ENCODE measurements at regions of chr12 and their contacts with region 1.

Region 1: DNA sequence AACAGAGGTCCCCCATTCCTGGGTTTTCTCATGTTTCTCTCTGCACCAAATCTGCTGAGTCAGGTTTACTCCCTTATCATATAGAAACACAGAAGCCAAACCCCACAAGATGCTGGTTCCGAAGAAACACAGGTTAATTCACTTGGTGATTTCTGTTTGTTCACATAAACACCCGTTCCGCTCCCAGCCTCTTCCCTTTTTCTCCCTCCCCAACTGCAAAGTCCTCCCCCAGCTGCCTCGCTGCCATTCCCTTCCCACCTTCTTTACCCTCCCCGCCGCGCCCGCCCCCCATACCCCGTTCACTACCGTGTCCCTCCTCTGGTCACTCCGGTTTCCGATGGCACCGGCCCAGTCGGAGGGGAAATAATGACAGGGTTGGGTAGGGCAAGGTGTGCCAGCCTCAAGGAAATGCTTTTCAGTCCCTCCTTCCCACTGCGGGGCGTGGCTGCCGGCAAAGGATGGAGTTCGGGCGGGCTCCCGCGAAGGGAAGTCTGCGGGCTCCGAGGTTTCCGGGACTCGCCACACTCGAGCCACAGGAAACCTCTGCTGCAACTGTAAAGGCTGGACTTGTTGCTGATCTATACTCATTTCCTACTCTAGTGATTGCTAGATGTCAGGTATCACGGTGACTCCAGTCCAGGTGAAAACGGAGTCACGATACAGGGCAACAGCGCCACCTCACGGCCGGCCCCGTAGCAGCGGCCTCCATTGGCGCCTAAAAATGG is at the start of gene STYK1:
- DNase-seq: peak; percentile 89 to 95
- H3K4me3 ChIP-seq: peak within 1 kb of the TSS; percentile 76
- H3K27ac ChIP-seq: peak within 1 kb of the TSS; percentile 77
- H3K4me1 ChIP-seq: peaks cover 11% of the 10 kb centered on the region; the same call in 1 of the 2 replicates
- H3K27me3 ChIP-seq: no peaks in the 10 kb centered on the region
- CTCF ChIP-seq: peak; percentile 99
- total RNA-seq, gene STYK1: 7.8 and 16.9 TPM in 2 replicates

Region 2: GRCh38 chr12:9331218-9331626 is 1342.6 kb before region 1 on chr12:
- CTCF ChIA-PET with region 1: no interaction called
- POLR2A ChIA-PET with region 1: no interaction called
- intact Hi-C with region 1: no loop called
- DNase-seq: peak in 1 of 2 experiments; percentile 65
- H3K4me3 ChIP-seq: no peak overlapping the region
- H3K27ac ChIP-seq: no peak overlapping the region
- H3K4me1 ChIP-seq: no peaks in the 10 kb centered on the region
- H3K27me3 ChIP-seq: no peaks in the 10 kb centered on the region
- CTCF ChIP-seq: peak; percentile 96

Region 3: DNA sequence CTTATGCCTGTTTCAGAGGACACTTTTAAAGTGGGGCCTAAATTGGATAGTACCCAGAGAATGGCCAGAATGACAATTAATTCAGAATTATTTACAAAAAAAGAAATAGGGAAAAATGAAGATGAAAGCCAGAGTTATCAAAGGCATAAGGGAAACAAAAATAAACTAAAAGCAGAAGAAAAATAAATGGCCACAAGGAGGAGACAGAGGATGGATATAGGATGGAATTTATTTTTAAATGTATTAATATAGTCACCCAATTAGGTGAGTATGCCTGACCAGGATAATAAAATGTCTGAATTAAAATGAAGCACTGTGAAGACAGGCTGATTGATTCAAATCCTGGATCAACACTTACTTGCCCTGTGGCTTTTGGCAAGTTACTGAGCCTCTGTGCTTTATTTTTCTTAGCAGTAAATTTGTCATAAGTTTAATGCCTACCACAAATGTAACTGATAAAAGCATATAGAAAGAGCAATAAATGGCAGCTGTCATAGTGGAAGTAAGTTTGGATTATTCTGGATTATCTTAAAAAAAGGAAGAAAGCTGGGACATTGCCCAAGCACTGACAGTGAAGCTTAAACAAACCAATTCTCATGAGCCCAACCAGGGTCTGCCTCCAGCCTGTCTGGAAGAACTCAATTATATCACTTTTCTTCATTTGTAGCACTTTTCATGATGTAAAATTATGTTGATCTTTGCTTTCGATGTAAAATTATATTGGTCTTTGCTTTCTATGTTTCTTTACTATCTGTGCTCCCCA is 639.9 kb before region 1 on chr12:
- CTCF ChIA-PET with region 1: no interaction called
- POLR2A ChIA-PET with region 1: no interaction called
- intact Hi-C with region 1: loop called (anchors 5 kb)
- DNase-seq: no peak
- H3K4me3 ChIP-seq: no peak overlapping the region
- H3K27ac ChIP-seq: no peak overlapping the region
- H3K4me1 ChIP-seq: no peaks in the 10 kb centered on the region
- H3K27me3 ChIP-seq: no peaks in the 10 kb centered on the region
- CTCF ChIP-seq: peak; percentile 80

Region 4: DNA sequence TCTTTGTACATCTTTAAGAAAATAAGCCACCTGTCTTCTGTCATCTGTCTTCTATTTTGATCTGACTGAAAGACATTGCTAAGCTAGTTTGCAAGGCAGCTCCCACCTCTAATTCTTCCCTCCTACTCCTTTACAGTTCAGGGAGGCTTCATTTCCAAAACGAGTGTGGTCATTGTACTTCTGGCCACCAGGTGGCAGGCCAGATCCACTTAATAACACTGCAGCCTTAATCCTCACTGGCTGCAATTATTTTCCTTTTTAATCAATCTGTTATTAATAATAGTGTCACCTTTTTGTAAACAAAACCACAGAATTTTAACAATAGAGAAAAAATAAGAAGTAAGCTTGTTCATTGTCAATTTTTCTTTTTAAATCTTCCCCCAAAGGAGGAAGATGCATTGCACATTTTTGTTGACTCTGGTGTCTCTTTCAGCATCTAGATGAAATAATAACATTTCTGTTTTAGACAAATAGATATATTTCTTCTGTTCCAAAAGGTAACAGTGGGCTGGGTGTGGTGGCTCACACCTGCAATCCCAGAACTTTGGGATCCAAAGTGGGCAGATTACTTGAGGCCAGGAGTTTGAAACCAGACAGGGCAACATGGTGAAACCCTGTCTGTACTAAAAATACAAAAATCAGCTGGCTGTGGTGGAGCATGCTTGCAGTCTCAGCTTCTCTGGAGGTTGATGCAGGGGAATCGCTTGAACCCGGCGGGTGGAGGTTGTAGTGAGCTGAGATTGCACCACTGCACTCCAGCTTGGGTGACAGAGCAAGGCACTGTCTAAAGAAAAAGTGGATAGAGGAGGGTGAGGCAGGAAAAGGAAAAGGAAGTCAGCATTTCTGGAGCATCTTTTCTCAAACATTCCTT is 437.8 kb before region 1 on chr12:
- CTCF ChIA-PET with region 1: interaction called, 3 read pairs
- POLR2A ChIA-PET with region 1: no interaction called
- intact Hi-C with region 1: loop called (anchors 1 kb)
- DNase-seq: peak; percentile 32 to 43
- H3K4me3 ChIP-seq: no peak overlapping the region
- H3K27ac ChIP-seq: no peak overlapping the region
- H3K4me1 ChIP-seq: no peaks in the 10 kb centered on the region
- H3K27me3 ChIP-seq: no peaks in the 10 kb centered on the region
- CTCF ChIP-seq: peak; percentile 96

Region 5: GRCh38 chr12:10364815-10365622 is 308.8 kb before region 1 on chr12:
- CTCF ChIA-PET with region 1: no interaction called
- POLR2A ChIA-PET with region 1: interaction called, 4 read pairs
- intact Hi-C with region 1: loop called (anchors 1 kb)
- DNase-seq: peak; percentile 73 to 79
- H3K4me3 ChIP-seq: peak overlapping the region; percentile 77
- H3K27ac ChIP-seq: peak overlapping the region; percentile 63
- H3K4me1 ChIP-seq: peaks cover 30% of the 10 kb centered on the region
- H3K27me3 ChIP-seq: no peaks in the 10 kb centered on the region
- CTCF ChIP-seq: no peak

Region 6: GRCh38 chr12:10562306-10562933 is 111.4 kb before region 1 on chr12:
- CTCF ChIA-PET with region 1: interaction called, 9 read pairs
- POLR2A ChIA-PET with region 1: no interaction called
- intact Hi-C with region 1: loop called (anchors 1 kb)
- DNase-seq: peak in 1 of 2 experiments; percentile 28
- H3K4me3 ChIP-seq: no peak overlapping the region
- H3K27ac ChIP-seq: no peak overlapping the region
- H3K4me1 ChIP-seq: no peaks in the 10 kb centered on the region
- H3K27me3 ChIP-seq: no peaks in the 10 kb centered on the region
- CTCF ChIP-seq: peak; percentile 87

Region 7: DNA sequence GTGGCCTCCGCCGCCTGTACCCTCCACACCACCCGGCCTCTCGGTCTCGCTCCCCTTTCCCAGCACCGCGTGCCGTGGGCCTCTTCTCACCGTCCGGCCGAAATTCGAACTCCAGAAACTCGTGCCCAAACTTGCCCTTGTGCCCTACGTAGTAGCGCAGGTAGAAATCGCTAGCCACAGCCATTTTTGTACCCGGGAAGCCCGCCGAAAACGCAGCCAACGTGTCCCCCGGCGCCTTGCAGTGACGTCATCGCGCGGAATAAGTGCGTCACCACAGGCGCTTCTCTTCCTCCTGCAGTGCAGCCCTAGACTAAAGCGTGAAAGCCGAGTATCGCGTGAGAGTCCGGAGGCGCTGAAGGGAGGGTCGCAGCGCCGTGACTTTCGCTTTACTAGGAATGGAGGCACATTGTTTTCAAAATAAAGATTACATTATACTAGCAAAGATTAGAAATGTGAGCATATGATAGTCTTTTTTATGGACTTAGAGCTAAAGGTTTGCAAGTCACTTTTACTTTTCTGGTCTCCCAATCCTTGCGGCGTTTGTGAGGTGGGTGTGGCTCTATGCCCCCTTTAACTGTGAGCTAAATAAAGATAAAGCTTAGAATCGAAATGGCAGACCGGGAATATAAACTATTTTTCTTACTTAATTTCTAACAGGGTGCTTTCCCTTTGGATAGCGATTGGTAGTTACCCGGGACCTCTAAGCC is 60.3 kb before region 1 on chr12 and contains the start of gene MAGOHB:
- CTCF ChIA-PET with region 1: interaction called, 3 read pairs
- POLR2A ChIA-PET with region 1: interaction called, 6 read pairs
- intact Hi-C with region 1: loop called (anchors 1 kb)
- DNase-seq: peak; percentile 86 to 97
- H3K4me3 ChIP-seq: peak within 1 kb of the TSS; percentile 90
- H3K27ac ChIP-seq: peak within 1 kb of the TSS; percentile 85
- H3K4me1 ChIP-seq: peaks cover 29% of the 10 kb centered on the region
- H3K27me3 ChIP-seq: no peaks in the 10 kb centered on the region
- CTCF ChIP-seq: no peak
- total RNA-seq, gene MAGOHB: 53.8 and 91.4 TPM in 2 replicates

Region 8: DNA sequence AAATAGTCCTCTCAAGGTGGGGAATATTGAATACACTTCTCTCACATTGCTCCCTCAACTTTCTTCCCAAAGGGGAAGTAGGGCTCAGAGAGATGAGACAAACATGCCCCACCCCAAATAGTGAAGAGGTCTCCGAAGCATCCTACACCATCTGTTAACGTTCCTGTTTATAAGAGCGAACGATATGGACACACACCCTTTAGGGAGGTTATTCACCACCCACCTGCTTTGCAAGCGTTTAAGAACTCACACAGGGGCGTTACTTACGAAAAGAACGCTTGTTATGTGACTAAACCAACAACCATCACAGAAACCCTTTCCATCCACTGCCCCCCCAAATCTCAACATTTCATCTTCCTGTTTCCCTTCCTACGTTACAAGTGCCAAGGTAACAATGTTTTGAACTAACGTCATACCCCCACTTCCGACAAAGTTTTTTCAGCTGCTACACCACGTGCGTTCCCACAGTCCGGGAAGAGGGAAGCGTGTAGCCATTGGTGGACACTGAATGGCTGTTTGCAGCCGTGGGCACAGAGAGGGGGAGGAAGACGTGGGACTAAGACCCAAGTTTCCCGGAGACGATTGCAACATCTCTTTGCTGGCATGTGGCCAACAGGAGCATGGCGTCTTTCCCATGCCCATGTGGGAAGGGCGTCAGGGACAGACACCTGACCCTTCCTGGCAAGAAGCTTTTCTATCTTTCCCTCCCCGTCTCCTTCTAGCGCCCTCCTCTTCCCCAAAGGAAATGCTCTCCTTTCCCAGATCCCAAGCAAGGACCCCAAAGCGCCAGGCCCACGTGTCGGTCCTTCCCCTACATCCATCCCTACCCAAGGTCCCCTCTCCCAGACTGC is 48.1 kb after region 1 on chr12:
- CTCF ChIA-PET with region 1: interaction called, 6 read pairs
- POLR2A ChIA-PET with region 1: no interaction called
- intact Hi-C with region 1: loop called (anchors 1 kb)
- DNase-seq: peak; percentile 93
- H3K4me3 ChIP-seq: peak overlapping the region; percentile 77
- H3K27ac ChIP-seq: peak overlapping the region; percentile 95
- H3K4me1 ChIP-seq: peaks cover 65% of the 10 kb centered on the region
- H3K27me3 ChIP-seq: no peaks in the 10 kb centered on the region
- CTCF ChIP-seq: no peak

Measured in PC-9 (cell line).